ENCODE measurements at regions of chr3 and their contacts with region 1.

Region 1: DNA sequence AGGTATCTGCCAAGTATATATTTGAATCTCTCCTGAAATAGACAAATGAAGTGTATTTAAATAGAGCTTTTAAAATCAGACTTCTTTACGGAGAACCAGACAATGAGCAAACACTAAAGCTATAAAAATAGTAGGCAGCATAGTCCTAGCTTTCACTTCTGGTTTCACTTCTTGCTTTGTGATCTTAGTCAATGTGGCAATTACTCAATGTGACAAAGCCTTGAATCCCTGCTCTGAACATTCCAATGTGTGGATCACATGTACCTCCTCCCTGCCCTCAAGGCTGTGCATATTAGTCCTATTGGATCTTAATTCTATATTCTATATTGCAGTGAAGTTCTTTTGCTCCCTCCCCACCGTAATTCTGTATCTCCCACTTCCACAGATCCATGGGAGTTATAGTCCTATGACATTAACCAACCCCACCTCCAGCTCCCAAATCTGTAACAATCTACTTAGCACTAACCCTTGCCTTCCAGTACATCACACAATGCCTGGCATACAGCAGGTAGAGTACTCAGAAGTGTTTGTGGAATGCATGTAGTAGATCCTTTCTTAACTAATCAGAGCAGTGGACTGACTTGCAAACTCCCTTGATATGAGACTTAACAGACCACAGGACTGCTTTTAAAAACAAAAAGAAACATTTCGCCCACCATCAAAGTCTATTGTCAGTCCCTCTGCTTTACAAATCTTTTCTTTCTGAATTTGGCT is 24.3 kb upstream of the CP start:
- DNase-seq: no peak
- ATAC-seq: peak; percentile 61
- H3K4me3 Mint-ChIP-seq: peak overlapping the region; percentile 57
- H3K27ac Mint-ChIP-seq: peak overlapping the region; percentile 69
- H3K4me1 Mint-ChIP-seq: peaks cover 68% of the 10 kb centered on the region
- H3K27me3 Mint-ChIP-seq: no peaks in the 10 kb centered on the region
- CTCF ChIP-seq: no peak

Region 2: DNA sequence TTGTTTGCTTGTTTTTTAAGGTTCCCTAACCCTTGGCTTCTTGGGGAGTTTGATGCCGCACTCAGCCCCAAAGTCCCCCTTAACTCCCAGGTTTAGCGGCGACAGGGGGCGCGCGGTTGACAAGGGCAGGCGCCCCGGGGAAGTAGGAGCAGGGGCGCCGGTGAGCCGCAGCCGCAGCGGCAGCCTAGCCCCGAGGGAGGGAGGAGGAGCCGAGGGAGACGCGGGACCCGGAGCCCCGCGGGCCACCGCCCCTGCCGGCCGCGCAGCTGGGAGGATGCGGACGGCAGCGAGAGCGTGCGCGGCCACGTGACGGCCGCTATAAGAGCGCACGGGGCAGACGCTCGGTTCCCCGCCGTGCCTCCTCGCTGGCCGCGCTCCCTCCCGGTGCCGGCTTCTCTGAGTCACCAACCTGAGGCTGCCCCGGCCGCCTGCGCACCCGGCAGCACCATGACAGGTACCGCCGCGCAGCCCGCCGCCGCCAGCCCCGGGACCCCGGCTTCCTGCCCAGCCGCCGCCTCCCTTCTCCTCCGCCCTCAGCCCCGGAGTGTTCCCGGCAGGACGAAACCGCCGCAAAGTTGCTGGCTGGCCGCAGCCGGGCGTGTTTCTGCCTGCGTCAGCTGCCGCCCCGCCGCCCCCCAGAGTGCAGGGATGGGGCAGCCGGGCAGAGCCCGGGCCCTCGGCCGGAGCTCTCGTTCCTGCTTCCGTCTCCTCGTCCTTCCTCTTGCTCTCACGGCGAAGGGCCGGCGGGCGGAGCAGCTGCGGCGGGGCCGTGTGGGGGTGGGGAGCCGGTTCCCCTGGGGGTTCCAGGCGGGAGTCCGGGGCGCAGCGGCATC is 254.5 kb before region 1 on chr3 and contains the start of gene GYG1:
- CTCF ChIA-PET with region 1: no interaction called
- POLR2A ChIA-PET with region 1: interaction called, 4 read pairs
- intact Hi-C with region 1: loop called (anchors 5 kb)
- DNase-seq: peak; percentile 72
- ATAC-seq: peak; percentile 91
- H3K4me3 Mint-ChIP-seq: peak within 1 kb of the TSS; percentile 84
- H3K27ac Mint-ChIP-seq: peak within 1 kb of the TSS; percentile 69
- H3K4me1 Mint-ChIP-seq: peaks cover 21% of the 10 kb centered on the region
- H3K27me3 Mint-ChIP-seq: no peaks in the 10 kb centered on the region
- CTCF ChIP-seq: no peak
- total RNA-seq, gene GYG1: 20.2 and 21.8 TPM in 2 replicates

Region 3: DNA sequence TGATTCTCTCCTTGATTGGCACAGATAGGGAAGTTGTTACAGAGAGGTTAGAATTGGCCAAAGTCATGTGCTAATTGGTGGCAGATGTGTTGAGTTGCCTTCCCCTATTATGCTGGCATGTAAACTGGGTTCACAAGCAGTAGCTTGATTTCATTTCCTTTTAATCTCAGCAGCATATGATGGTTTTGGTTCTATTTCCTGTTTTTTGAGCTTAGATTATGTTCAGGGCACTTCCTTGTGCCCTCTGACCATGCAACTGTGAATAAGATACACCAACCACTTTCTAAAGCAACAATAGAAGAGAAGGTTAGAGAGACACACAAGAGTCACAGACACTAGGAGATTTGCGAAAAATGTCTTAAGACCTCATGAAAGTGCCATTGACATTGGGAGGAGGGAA is 99.9 kb before region 1 on chr3:
- CTCF ChIA-PET with region 1: no interaction called
- POLR2A ChIA-PET with region 1: interaction called, 3 read pairs
- intact Hi-C with region 1: loop called (anchors 1 kb)
- DNase-seq: no peak
- ATAC-seq: peak; percentile 87
- H3K4me3 Mint-ChIP-seq: no peak overlapping the region
- H3K27ac Mint-ChIP-seq: no peak overlapping the region
- H3K4me1 Mint-ChIP-seq: peaks cover 32% of the 10 kb centered on the region
- H3K27me3 Mint-ChIP-seq: no peaks in the 10 kb centered on the region
- CTCF ChIP-seq: no peak

Region 4: DNA sequence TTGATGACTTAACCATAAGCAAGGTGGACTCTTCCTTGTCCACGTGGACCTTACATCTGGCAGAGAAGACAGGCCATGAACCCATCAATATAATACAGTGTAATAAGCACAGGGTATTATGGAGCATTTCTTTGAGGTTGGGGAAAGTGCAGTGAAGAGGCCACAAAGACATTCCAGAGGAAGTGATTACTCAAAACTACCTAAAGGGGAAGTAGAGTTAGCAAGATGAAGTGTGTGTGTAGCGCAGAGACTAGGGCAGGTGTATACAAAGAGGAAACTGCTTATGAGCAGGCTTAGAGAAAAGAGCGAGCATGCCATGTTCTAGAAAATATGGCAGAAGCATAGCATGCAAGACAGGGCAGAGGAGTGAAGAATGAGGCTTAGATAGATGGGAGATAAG is 42.1 kb before region 1 on chr3:
- CTCF ChIA-PET with region 1: no interaction called
- POLR2A ChIA-PET with region 1: no interaction called
- intact Hi-C with region 1: loop called (anchors 2 kb)
- DNase-seq: no peak
- ATAC-seq: peak; percentile 97
- H3K4me3 Mint-ChIP-seq: peak overlapping the region; percentile 17
- H3K27ac Mint-ChIP-seq: peak overlapping the region; percentile 54
- H3K4me1 Mint-ChIP-seq: peaks cover 18% of the 10 kb centered on the region
- H3K27me3 Mint-ChIP-seq: no peaks in the 10 kb centered on the region
- CTCF ChIP-seq: no peak

Region 5: GRCh38 chr3:149224736-149225594 is 20.9 kb before region 1 on chr3:
- CTCF ChIA-PET with region 1: no interaction called
- POLR2A ChIA-PET with region 1: no interaction called
- intact Hi-C with region 1: loop called (anchors 1 kb)
- DNase-seq: no peak
- ATAC-seq: peak; percentile 69
- H3K4me3 Mint-ChIP-seq: peak overlapping the region; percentile 76
- H3K27ac Mint-ChIP-seq: peak overlapping the region; percentile 35
- H3K4me1 Mint-ChIP-seq: peaks cover 20% of the 10 kb centered on the region
- H3K27me3 Mint-ChIP-seq: no peaks in the 10 kb centered on the region
- CTCF ChIP-seq: no peak

Region 6: DNA sequence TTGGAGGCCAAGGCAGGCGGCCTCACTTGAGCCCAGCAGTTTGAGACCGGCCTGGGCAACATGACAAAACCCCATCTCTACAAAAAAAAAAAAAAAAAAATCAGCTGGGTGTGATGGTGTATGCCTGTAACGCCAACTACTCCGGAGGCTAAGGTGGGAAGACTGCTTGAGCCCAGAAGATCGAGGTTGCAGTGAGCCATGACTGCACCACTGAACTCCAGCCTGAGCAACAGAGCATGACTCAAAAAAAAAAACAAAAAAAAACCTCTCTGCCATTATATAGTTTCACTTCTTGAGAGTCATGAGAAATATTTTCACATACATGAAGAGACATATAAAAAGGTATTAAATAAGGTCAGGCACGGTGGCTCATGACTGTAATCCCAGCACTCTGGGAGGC is 21.7 kb after region 1 on chr3:
- CTCF ChIA-PET with region 1: interaction called, 3 read pairs
- POLR2A ChIA-PET with region 1: no interaction called
- intact Hi-C with region 1: loop called (anchors 1 kb)
- DNase-seq: no peak
- ATAC-seq: peak; percentile 69
- H3K4me3 Mint-ChIP-seq: peak overlapping the region; percentile 56
- H3K27ac Mint-ChIP-seq: no peak overlapping the region
- H3K4me1 Mint-ChIP-seq: peaks cover 29% of the 10 kb centered on the region
- H3K27me3 Mint-ChIP-seq: no peaks in the 10 kb centered on the region
- CTCF ChIP-seq: no peak